WTC11 (cell line): ENCODE measurements at regions of chr1 and their contacts with region 1.

Region 1: DNA sequence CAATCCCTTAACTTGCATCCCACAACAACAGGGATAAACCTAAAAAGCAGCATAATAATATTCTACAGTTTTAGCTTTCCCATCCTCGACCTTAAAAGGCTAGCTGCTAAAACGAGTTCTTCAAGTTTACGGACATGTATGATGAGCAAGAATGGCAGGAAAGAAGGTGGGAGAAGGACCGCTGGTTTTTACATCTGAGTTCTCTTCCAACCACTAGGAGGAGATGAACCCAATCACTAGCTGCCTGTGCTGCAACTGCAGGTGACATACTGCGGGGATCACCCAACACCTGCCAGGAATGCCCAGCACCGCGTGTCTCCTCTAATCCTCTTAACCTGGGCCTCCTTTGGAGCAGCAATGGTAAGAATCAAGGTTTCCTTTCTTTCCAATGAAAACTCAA is 23.5 kb downstream of the TOR3A start:
- DNase-seq: peak; percentile 63
- ATAC-seq: peak; percentile 98
- H3K4me3 Mint-ChIP-seq: no peak overlapping the region
- H3K27ac Mint-ChIP-seq: no peak overlapping the region
- H3K4me1 Mint-ChIP-seq: peaks cover 5% of the 10 kb centered on the region; the same call in 1 of the 2 replicates
- H3K27me3 Mint-ChIP-seq: no peaks in the 10 kb centered on the region
- CTCF ChIP-seq: peak; percentile 34; the same call in 1 of the 2 replicates

Region 2: GRCh38 chr1:179087665-179088225 is 17.6 kb before region 1 on chr1:
- CTCF ChIA-PET with region 1: interaction called, 14 read pairs
- POLR2A ChIA-PET with region 1: no interaction called
- DNase-seq: peak; percentile 77
- ATAC-seq: peak; percentile 80
- H3K4me3 Mint-ChIP-seq: peak overlapping the region; percentile 65
- H3K27ac Mint-ChIP-seq: peak overlapping the region; percentile 93
- H3K4me1 Mint-ChIP-seq: peaks cover 38% of the 10 kb centered on the region
- H3K27me3 Mint-ChIP-seq: no peaks in the 10 kb centered on the region
- CTCF ChIP-seq: no peak

Region 3: DNA sequence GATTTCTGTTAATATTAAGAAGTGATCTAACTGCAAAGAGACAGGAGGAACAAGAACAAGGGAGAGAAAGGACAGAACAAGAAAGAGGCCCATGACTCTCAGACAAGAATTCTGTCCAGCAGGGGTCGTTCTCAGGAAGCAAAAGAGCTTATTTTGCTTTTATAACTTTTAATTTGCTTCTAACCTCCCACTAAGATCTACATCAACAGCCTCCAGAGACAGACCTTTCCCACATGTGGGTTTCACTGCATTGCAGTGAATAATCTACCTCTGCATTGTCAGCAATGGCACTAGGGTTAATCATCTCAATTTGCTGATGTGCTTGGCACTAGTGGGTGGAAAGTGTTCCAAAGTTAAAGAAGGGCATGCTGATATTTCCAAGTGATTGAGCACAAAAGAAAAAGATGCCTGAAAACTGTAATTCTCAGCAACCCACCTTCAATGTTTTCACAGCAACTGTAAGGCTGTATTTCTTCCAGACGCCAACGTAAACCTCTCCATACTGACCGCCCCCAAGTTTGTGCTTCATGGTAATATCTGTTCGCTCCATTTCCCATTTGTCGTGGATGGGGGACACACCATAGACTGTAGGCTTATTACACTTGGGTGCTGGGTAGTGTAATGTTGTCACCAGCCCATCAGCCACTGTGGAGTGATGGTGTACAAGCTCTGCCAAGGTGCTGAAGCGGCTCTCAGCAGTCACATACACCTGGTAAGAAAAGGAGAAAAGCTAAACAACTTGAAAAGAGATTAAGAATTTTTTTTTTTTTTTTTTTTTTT is 16.0 kb after region 1 on chr1:
- CTCF ChIA-PET with region 1: interaction called, 14 read pairs
- POLR2A ChIA-PET with region 1: no interaction called
- DNase-seq: peak; percentile 28
- ATAC-seq: peak; percentile 53
- H3K4me3 Mint-ChIP-seq: no peak overlapping the region
- H3K27ac Mint-ChIP-seq: peak overlapping the region; percentile 84
- H3K4me1 Mint-ChIP-seq: peaks cover 12% of the 10 kb centered on the region
- H3K27me3 Mint-ChIP-seq: no peaks in the 10 kb centered on the region
- CTCF ChIP-seq: peak; percentile 31; the same call in 1 of the 2 replicates